Posterior vena cava (tissue), 2 donors: ENCODE measurements at regions of chr19 and their contacts with region 1.

Region 1: DNA sequence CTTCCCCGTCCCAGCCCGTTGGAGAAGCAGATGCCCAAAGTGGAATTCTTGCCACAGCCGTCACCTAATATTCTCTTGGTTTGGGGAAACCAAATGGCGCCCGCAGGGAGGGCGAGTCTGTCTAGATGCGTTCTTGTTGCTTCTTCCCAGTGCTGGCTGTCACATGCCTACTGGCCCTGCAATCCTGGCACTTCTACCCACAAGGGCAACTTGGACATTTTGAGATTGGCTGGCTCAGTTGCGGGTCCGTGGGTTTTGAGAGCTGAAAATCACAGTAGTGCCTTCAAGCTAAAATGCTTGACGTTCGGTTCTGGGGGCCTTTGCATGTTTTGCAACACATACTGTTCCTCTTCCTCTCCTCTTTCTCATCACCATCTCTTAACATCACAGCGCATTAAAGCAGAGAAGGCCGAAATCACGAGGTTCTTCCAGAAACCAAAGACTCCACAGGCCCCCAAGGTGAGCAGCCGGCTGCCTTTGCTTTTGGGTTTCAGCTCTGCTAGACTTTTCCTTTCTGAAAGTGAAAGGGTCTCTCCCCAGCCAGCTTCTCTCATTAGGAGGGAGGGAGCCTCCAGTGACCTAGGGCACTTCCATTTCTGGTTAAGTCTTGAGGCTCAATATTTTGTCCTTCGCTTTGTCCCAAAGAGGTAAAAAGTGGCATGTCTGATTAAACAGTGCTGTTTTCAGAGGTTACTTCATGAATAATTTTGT is 21.1 kb downstream of the CHAF1A start:
- DNase-seq: no peak

Region 2: GRCh38 chr19:2454962-2455850 is 1968.4 kb before region 1 on chr19:
- intact Hi-C with region 1: loop called in 1 of 2 experiments (anchors 5 kb)
- DNase-seq: peak; percentile 79

Region 3: DNA sequence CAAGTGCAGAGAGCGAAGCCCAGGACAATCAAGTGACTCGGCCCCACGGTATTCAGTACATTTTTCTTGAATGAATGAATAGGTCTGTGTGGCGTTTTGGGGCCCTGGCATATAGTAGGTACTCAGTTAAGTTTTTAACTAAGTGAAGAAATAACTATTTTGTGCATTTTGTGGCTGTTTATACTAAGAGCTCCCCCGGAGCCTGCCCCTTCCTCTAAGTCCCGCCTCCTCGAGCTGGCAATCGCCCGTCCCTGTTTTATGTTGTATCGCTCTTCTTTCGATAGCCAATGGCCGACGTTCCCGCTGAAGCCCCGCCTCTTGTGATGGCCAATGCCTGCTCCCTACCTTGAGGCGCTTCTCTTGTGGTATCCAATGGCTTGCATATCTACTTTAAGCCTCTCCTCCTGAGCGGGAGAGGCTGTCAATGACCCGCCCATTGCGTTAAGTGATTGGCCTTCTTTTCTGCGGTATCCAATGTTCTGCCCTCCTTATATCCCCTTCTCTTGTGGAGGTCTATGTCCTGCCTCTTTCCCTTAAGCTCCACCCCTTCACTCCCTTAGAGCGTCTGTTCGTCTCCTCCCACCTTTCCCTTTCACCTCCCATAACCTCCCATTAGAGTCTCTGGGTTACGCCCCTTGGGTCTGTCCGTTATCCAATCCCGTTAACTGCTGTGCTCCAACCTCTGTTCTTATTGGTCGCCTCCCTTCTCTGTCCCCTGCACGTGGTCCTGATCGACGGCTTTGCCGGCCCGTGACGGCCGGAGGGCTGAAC is 48.0 kb after region 1 on chr19:
- intact Hi-C with region 1: no loop called
- DNase-seq: peak; percentile 99